ENCODE measurements at regions of chr2 and their contacts with region 1.

Region 1: GRCh38 chr2:121974897-121975661 is 219.6 kb downstream of the TSN start:
- DNase-seq: peak; percentile 85
- H3K4me3 ChIP-seq: peak overlapping the region; percentile 51
- H3K27ac ChIP-seq: no peak overlapping the region
- H3K4me1 ChIP-seq: peaks cover 6% of the 10 kb centered on the region; the same call in 1 of the 2 replicates
- H3K27me3 ChIP-seq: no peaks in the 10 kb centered on the region

Region 2: DNA sequence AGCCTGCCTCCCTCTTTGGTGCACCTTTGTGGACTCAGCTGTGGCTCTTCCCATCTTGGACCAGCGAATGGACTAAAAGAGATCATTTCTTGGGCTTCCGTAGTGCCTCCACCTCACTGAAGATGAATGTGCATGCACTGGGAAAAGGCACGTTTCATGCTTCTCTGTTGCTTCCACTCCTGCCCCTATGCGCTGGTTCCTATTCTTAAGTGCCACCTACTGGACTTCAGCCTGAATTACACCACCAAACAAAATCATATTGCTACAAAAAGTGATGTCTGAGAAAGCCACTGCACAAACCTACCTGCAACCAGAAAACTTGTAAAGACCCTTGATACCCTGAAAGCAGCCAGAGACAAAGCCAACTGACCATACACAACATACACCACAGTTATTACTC is 476.0 kb after region 1 on chr2:
- in situ Hi-C with region 1: loop called (anchors 10 kb)
- DNase-seq: peak; percentile 64
- H3K4me3 ChIP-seq: no peak overlapping the region
- H3K27ac ChIP-seq: no peak overlapping the region
- H3K4me1 ChIP-seq: no peaks in the 10 kb centered on the region
- H3K27me3 ChIP-seq: no peaks in the 10 kb centered on the region

Measured in GM23248 (cell line).